GM12878 (cell line): ENCODE measurements at regions of chr17 and their contacts with region 1.

Region 1: GRCh38 chr17:409848-410545 is 57.4 kb upstream of the RPH3AL start:
- DNase-seq: peak; percentile 100
- ATAC-seq: peak; percentile 93
- H3K4me3 ChIP-seq: peak overlapping the region; percentile 71
- H3K27ac ChIP-seq: peak overlapping the region; percentile 65
- H3K4me1 ChIP-seq: peaks cover 16% of the 10 kb centered on the region
- H3K27me3 ChIP-seq: no peaks in the 10 kb centered on the region
- CTCF ChIP-seq: no peak
- EP300 ChIP-seq: no peak
- POLR2A ChIP-seq: peak; percentile 90
- RAD21 ChIP-seq: no peak

Region 2: DNA sequence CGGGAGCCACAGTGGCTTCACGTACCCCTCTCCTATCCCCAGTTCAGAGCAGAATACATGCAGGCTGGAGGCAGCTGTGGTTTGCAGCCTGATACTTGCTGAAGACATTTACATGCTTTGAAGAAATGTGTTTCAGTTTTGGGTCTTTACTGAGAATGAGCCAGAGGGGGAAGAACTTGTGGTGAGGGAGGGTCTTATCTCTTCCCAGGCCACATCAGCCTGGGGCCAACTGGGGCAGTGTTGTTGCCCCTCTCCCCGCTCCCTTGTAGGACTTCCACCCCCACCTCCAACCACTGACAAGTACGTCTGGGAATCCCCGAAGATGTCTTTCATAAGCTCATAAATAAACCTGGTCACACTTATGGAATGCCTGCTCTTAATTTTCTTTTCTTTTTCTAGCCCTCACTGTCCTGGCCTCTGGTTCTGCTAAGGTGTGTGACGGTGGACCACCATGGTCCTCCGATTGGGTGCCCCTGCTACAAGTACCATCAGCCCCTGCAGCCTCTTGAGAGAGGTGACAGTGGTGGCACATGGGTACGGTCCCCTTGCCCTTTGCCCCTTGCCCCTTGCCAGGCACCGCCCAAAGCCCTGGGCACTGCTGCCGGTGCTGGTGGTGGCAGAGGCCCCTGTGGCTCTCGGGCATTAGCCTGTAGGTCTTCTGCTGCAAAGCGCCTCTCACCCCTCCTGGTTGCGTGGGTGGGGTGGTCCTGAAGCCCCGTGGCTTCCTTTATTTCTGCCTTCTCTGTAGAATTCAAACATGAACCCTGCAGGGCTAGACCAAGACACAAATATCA is 87.4 kb after region 1 on chr17:
- CTCF ChIA-PET with region 1: interaction called, 12 read pairs
- POLR2A ChIA-PET with region 1: no interaction called
- RAD21 ChIA-PET with region 1: interaction called, 3 read pairs
- SMC1A ChIA-PET with region 1: interaction called, 7 read pairs
- in situ Hi-C with region 1: no loop called
- intact Hi-C with region 1: no loop called
- DNase-seq: no peak
- ATAC-seq: peak; percentile 79
- H3K4me3 ChIP-seq: no peak overlapping the region
- H3K27ac ChIP-seq: peak overlapping the region; percentile 24; the same call in 1 of the 2 replicates
- H3K4me1 ChIP-seq: peaks cover 16% of the 10 kb centered on the region
- H3K27me3 ChIP-seq: no peaks in the 10 kb centered on the region
- CTCF ChIP-seq: no peak
- EP300 ChIP-seq: no peak
- POLR2A ChIP-seq: no peak
- RAD21 ChIP-seq: no peak

Region 3: GRCh38 chr17:624341-624860 is 214.4 kb after region 1 on chr17:
- CTCF ChIA-PET with region 1: interaction called, 10 read pairs
- POLR2A ChIA-PET with region 1: no interaction called
- RAD21 ChIA-PET with region 1: no interaction called
- SMC1A ChIA-PET with region 1: interaction called, 5 read pairs
- in situ Hi-C with region 1: no loop called
- intact Hi-C with region 1: no loop called
- DNase-seq: no peak
- ATAC-seq: no peak
- H3K4me3 ChIP-seq: no peak overlapping the region
- H3K27ac ChIP-seq: no peak overlapping the region
- H3K4me1 ChIP-seq: no peaks in the 10 kb centered on the region
- H3K27me3 ChIP-seq: no peaks in the 10 kb centered on the region
- CTCF ChIP-seq: no peak
- EP300 ChIP-seq: no peak
- POLR2A ChIP-seq: no peak
- RAD21 ChIP-seq: no peak

Region 4: GRCh38 chr17:688100-688989 is 278.3 kb after region 1 on chr17:
- CTCF ChIA-PET with region 1: interaction called, 22 read pairs
- POLR2A ChIA-PET with region 1: no interaction called
- RAD21 ChIA-PET with region 1: interaction called, 12 read pairs
- SMC1A ChIA-PET with region 1: interaction called, 11 read pairs
- in situ Hi-C with region 1: no loop called
- intact Hi-C with region 1: loop called (anchors 5 kb)
- DNase-seq: no peak
- ATAC-seq: no peak
- H3K4me3 ChIP-seq: no peak overlapping the region
- H3K27ac ChIP-seq: no peak overlapping the region
- H3K4me1 ChIP-seq: no peaks in the 10 kb centered on the region
- H3K27me3 ChIP-seq: no peaks in the 10 kb centered on the region
- CTCF ChIP-seq: no peak
- EP300 ChIP-seq: no peak
- POLR2A ChIP-seq: no peak
- RAD21 ChIP-seq: no peak

Region 5: GRCh38 chr17:716238-716637 is 306.2 kb after region 1 on chr17:
- CTCF ChIA-PET with region 1: interaction called, 11 read pairs
- POLR2A ChIA-PET with region 1: no interaction called
- RAD21 ChIA-PET with region 1: interaction called, 7 read pairs
- SMC1A ChIA-PET with region 1: interaction called, 4 read pairs
- in situ Hi-C with region 1: no loop called
- intact Hi-C with region 1: no loop called
- DNase-seq: no peak
- ATAC-seq: no peak
- H3K4me3 ChIP-seq: no peak overlapping the region
- H3K27ac ChIP-seq: no peak overlapping the region
- H3K4me1 ChIP-seq: no peaks in the 10 kb centered on the region; the same call in 1 of the 2 replicates
- H3K27me3 ChIP-seq: no peaks in the 10 kb centered on the region
- CTCF ChIP-seq: no peak
- EP300 ChIP-seq: no peak
- POLR2A ChIP-seq: no peak
- RAD21 ChIP-seq: no peak